ENCODE measurements at regions of chr22 and their contacts with region 1.

Region 1: GRCh38 chr22:22576244-22576988 is 17.4 kb upstream of the PRAME start:
- H3K4me3 ChIP-seq: no peak overlapping the region
- H3K27ac ChIP-seq: no peak overlapping the region
- H3K4me1 ChIP-seq: no peaks in the 10 kb centered on the region
- CTCF ChIP-seq: peak; percentile 61; the same call in 1 of the 2 replicates

Region 2: DNA sequence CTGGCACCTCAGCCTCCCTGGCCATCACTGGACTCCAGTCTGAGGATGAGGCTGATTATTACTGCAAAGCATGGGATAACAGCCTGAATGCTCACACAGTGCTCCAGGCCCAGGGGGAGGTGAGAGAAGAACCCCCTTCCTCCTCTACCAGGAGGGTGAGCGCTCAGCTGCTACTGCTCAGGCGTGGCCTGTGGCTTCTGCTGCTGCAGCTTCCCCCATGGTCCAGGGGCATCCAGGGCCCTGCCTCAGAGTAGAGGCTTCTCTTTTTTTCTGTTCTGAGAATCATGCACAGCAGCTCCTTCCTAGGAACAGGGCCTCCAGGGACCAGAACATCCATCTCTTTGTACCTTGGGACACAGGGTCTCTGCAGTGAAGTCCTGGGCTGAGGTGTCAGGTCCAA is 248.7 kb before region 1 on chr22:
- CTCF ChIA-PET with region 1: no interaction called
- POLR2A ChIA-PET with region 1: no interaction called
- H3K4me3 ChIP-seq: no peak overlapping the region
- H3K27ac ChIP-seq: no peak overlapping the region
- H3K4me1 ChIP-seq: no peaks in the 10 kb centered on the region
- CTCF ChIP-seq: no peak

Region 3: GRCh38 chr22:22558972-22559603 is 17.3 kb before region 1 on chr22 and contains the start of gene PRAME:
- CTCF ChIA-PET with region 1: interaction called, 37 read pairs
- POLR2A ChIA-PET with region 1: no interaction called
- H3K4me3 ChIP-seq: no peak within 1 kb of the TSS
- H3K27ac ChIP-seq: no peak within 1 kb of the TSS
- H3K4me1 ChIP-seq: no peaks in the 10 kb centered on the region
- CTCF ChIP-seq: peak; percentile 92

Region 4: DNA sequence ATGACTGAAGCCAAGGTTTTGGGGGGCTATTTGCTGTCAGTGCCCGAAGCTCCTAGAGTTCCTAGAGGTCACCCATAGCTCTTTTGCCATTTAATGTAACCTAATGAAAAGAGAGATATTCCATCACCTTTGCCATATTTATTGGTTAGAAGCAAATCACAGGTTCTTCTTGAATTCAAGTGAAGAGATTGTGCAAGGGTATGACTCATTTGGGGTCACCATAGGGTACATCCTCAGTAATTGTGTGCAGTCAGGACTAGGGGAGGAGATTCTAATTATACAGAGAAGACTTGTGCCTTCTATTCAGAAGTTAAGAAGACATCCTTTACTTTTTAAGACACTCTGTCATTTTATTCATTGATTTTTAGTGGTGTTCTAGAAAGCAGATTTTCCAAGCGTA is 10.4 kb before region 1 on chr22:
- CTCF ChIA-PET with region 1: interaction called, 37 read pairs
- POLR2A ChIA-PET with region 1: no interaction called
- H3K4me3 ChIP-seq: no peak overlapping the region
- H3K27ac ChIP-seq: no peak overlapping the region
- H3K4me1 ChIP-seq: no peaks in the 10 kb centered on the region
- CTCF ChIP-seq: no peak

Region 5: GRCh38 chr22:22593964-22594656 is 17.7 kb after region 1 on chr22:
- CTCF ChIA-PET with region 1: interaction called, 148 read pairs
- POLR2A ChIA-PET with region 1: no interaction called
- H3K4me3 ChIP-seq: no peak overlapping the region
- H3K27ac ChIP-seq: no peak overlapping the region
- H3K4me1 ChIP-seq: no peaks in the 10 kb centered on the region
- CTCF ChIP-seq: peak; percentile 66